GM12878 (cell line): ENCODE measurements at regions of chr20 and their contacts with region 1.

Region 1: DNA sequence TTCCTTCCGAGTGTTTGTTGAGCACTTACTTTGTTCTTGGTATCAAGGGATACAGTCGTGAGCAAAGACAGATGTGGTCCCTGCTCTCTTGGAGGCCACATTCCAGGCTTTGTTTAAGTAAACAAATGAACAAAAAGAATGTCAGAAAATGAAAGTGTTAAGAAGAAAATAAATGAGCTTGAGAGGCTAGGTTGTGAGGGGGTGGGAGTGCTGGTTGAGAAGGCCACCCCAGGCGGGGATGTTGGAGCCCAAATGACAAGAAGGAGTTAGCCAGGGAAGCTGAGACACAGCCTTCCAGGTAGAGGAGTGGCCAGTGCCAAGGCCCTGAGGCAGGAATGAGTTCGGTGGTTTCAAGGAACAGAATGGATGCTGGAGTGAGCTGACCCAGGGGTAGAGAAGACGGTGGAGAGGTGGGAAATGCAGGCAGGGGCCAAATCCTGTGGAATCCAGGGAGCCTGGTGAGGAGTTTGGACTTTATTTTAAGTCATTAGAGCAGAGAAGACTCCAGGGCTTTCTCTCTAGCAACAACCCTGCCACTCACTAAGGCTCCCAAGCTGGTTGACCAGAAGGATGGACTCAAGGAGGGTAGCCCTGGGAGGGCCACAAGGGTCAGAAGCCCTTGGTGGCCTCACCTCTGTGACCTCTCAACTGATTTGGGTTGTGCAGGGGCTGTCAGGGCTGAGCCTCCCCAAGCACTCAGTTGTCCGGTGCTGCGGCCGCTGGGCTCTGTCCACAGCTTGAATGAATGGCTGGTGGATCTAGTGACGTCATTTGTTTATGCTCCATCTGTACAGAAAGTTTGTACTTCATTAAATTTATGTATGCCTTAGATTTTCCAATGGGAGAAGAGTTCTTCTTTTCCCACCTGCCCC is 66.0 kb upstream of the STX16 start:
- DNase-seq: no peak
- ATAC-seq: no peak
- H3K4me3 ChIP-seq: no peak overlapping the region
- H3K27ac ChIP-seq: no peak overlapping the region
- H3K4me1 ChIP-seq: no peaks in the 10 kb centered on the region
- H3K27me3 ChIP-seq: peaks cover 0 to 4% of the 10 kb centered on the region in 2 experiments; a peak in 3 of 4 replicates
- CTCF ChIP-seq: no peak
- EP300 ChIP-seq: no peak
- POLR2A ChIP-seq: no peak
- RAD21 ChIP-seq: no peak

Region 2: GRCh38 chr20:58436868-58437645 is 148.1 kb before region 1 on chr20:
- CTCF ChIA-PET with region 1: no interaction called
- POLR2A ChIA-PET with region 1: no interaction called
- RAD21 ChIA-PET with region 1: no interaction called
- SMC1A ChIA-PET with region 1: no interaction called
- in situ Hi-C with region 1: no loop called
- intact Hi-C with region 1: no loop called
- DNase-seq: no peak
- ATAC-seq: peak; percentile 89
- H3K4me3 ChIP-seq: no peak overlapping the region
- H3K27ac ChIP-seq: no peak overlapping the region
- H3K4me1 ChIP-seq: peaks cover 2% of the 10 kb centered on the region; the same call in 1 of the 2 replicates
- H3K27me3 ChIP-seq: no peaks in the 10 kb centered on the region
- CTCF ChIP-seq: no peak
- EP300 ChIP-seq: no peak
- POLR2A ChIP-seq: no peak
- RAD21 ChIP-seq: no peak

Region 3: GRCh38 chr20:58634521-58635278 is 49.6 kb after region 1 on chr20:
- CTCF ChIA-PET with region 1: no interaction called
- POLR2A ChIA-PET with region 1: no interaction called
- RAD21 ChIA-PET with region 1: no interaction called
- SMC1A ChIA-PET with region 1: no interaction called
- in situ Hi-C with region 1: loop called (anchors 5 kb)
- intact Hi-C with region 1: no loop called
- DNase-seq: no peak
- ATAC-seq: peak; percentile 76
- H3K4me3 ChIP-seq: no peak overlapping the region
- H3K27ac ChIP-seq: no peak overlapping the region
- H3K4me1 ChIP-seq: peaks cover 8% of the 10 kb centered on the region
- H3K27me3 ChIP-seq: peaks cover 2 to 8% of the 10 kb centered on the region in 2 experiments
- CTCF ChIP-seq: no peak
- EP300 ChIP-seq: no peak
- POLR2A ChIP-seq: 0 out of 2 replicates have a peak, but pooled peaks have one; percentile 27
- RAD21 ChIP-seq: no peak